ENCODE measurements at regions of chr1 and their contacts with region 1.

Region 1: DNA sequence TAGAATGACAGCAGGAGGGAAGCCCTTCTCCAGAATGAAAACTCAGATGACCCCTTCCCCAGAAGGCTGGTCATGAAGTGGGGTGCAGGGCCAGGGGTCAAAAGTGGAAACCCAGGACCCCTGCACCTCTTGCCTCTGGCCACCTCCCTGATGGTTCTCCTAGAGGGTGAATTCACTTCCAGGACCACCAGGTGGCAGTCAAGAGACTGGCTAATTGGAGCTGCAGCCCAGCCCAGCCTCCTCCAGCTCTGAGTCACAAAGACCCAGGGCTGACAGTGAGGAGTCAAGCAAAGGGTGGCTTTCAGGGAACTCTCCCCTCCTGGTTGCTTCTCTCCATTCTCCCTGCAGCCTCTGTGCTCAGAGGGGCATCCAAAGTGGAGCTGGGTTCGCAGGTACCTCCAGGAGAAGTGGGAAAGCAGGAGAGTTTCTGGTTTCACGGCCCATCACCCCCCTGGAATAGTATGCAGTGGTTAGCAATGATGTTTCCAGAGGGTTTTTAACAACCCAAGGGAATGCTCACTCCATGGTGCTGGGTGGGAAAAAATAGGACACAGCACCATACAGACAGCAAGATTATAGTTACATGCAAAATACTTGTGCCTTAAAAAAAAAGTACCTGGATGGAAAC is 6.1 kb upstream of the EPHB2 start:
- DNase-seq: peak; percentile 76 to 88 (median 82)
- ATAC-seq: peak; percentile 52 to 94 (median 91)
- H3K4me3 ChIP-seq: no peak overlapping the region
- H3K27ac ChIP-seq: no peak overlapping the region
- H3K4me1 ChIP-seq: peaks cover 0 to 15% (median 0%) of the 10 kb centered on the region in 12 donors
- H3K27me3 ChIP-seq: peaks cover 0 to 7% (median 0%) of the 10 kb centered on the region in 9 donors
- CTCF ChIP-seq: peak; percentile 79 to 95 (median 90)
- POLR2A ChIP-seq: no peak

Region 2: DNA sequence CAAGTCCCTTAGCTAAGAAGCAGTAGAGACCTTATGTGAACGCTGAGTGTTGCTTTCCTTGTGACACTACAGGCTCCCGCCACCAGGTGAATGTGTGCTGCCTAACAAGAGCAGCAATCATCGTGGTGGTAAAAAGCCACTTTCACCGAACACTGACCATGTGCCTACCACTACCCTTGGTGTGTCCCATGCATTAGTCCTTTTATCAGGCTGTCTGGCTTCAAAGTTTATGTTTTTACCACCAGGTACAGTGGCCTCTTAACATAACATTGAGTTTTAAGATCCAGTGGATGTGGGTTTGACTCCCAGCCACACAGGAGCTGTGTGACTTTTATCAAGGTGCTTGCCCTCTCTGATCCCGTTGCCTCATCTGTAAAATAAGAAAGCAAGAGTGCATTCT is 49.9 kb before region 1 on chr1:
- intact Hi-C with region 1: no loop called
- DNase-seq: no peak
- ATAC-seq: no peak
- H3K4me3 ChIP-seq: peak overlapping the region in 9 of 12 donors; percentile 4 to 63 (median 39)
- H3K27ac ChIP-seq: peak overlapping the region in 1 of 12 donors; percentile 84
- H3K4me1 ChIP-seq: peaks cover 0 to 10% (median 0%) of the 10 kb centered on the region in 12 donors
- H3K27me3 ChIP-seq: peaks cover 0 to 56% (median 5%) of the 10 kb centered on the region in 9 donors
- CTCF ChIP-seq: no peak
- POLR2A ChIP-seq: no peak

Region 3: GRCh38 chr1:22868331-22868730 is 163.8 kb after region 1 on chr1:
- intact Hi-C with region 1: loop called in 1 of 10 experiments (anchors 5 kb)
- DNase-seq: no peak
- ATAC-seq: no peak
- H3K4me3 ChIP-seq: no peak overlapping the region
- H3K27ac ChIP-seq: no peak overlapping the region
- H3K4me1 ChIP-seq: peaks cover 0 to 12% (median 1%) of the 10 kb centered on the region in 12 donors
- H3K27me3 ChIP-seq: peaks cover 0 to 6% (median 0%) of the 10 kb centered on the region in 9 donors
- CTCF ChIP-seq: no peak
- POLR2A ChIP-seq: no peak

Region 4: DNA sequence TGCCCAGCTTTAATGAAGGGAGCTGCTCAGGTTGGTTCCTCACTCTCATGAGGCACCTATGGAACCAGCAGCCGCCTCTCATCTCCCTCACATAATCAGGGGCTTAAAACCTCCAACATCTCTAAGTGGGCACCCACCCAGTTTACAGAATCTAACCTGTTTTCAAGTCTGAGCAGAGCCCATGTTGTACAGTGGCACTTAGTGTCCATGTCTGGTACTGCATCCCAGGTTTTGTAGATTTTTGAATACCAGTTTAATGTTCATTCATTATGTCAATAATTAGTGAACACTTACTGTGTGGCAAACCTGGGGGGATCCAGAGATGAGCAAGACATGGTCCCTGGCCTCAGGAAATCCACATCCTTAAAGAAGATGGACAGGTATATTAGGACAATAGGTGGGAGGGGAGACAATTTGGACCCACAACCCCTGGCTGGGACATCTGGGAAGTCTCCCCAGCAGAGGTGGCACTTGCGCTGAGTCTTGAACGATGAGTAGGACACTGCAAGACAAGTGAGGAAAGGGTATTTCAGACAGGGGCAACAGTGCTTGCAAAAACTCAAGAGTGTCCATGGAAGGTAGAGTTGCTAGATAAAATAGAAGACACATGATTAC is 184.8 kb after region 1 on chr1:
- intact Hi-C with region 1: loop called (anchors 1 to 5 kb)
- DNase-seq: no peak
- ATAC-seq: peak in 2 of 4 donors; percentile 38 to 64
- H3K4me3 ChIP-seq: no peak overlapping the region
- H3K27ac ChIP-seq: no peak overlapping the region
- H3K4me1 ChIP-seq: peaks cover 0 to 7% (median 0%) of the 10 kb centered on the region in 12 donors
- H3K27me3 ChIP-seq: peaks cover 0 to 10% (median 0%) of the 10 kb centered on the region in 9 donors
- CTCF ChIP-seq: peak; percentile 60 to 79 (median 69)
- POLR2A ChIP-seq: no peak

Region 5: GRCh38 chr1:22922640-22923039 is 218.1 kb after region 1 on chr1:
- intact Hi-C with region 1: loop called in 3 of 10 experiments (anchors 10 kb)
- DNase-seq: no peak
- ATAC-seq: no peak
- H3K4me3 ChIP-seq: no peak overlapping the region
- H3K27ac ChIP-seq: no peak overlapping the region
- H3K4me1 ChIP-seq: peaks cover 0 to 19% (median 0%) of the 10 kb centered on the region in 12 donors
- H3K27me3 ChIP-seq: peaks cover 0 to 14% (median 0%) of the 10 kb centered on the region in 9 donors
- CTCF ChIP-seq: no peak
- POLR2A ChIP-seq: no peak

Region 6: GRCh38 chr1:22930235-22930912 is 225.8 kb after region 1 on chr1:
- intact Hi-C with region 1: loop called in 6 of 10 experiments (anchors 2 to 10 kb)
- DNase-seq: peak; percentile 28 to 70 (median 39)
- ATAC-seq: peak; percentile 51 to 85 (median 79)
- H3K4me3 ChIP-seq: no peak overlapping the region
- H3K27ac ChIP-seq: no peak overlapping the region
- H3K4me1 ChIP-seq: no peaks in the 10 kb centered on the region
- H3K27me3 ChIP-seq: peaks cover 0 to 19% (median 0%) of the 10 kb centered on the region in 9 donors
- CTCF ChIP-seq: peak; percentile 34 to 71 (median 64)
- POLR2A ChIP-seq: no peak

Measured in heart left ventricle (tissue), 16 donors.